Panc1 (cell line): ENCODE measurements at regions of chr12 and their contacts with region 1.

Region 1: GRCh38 chr12:48051681-48052080 is 47.4 kb upstream of the COL2A1 start:
- DNase-seq: no peak
- ATAC-seq: no peak
- H3K4me3 ChIP-seq: no peak overlapping the region
- H3K27ac ChIP-seq: no peak overlapping the region
- H3K4me1 ChIP-seq: no peaks in the 10 kb centered on the region
- H3K27me3 ChIP-seq: no peaks in the 10 kb centered on the region
- CTCF ChIP-seq: no peak

Region 2: GRCh38 chr12:47636908-47637780 is 414.5 kb before region 1 on chr12:
- CTCF ChIA-PET with region 1: no interaction called
- POLR2A ChIA-PET with region 1: no interaction called
- in situ Hi-C with region 1: no loop called
- intact Hi-C with region 1: no loop called
- DNase-seq: no peak
- ATAC-seq: no peak
- H3K4me3 ChIP-seq: no peak overlapping the region
- H3K27ac ChIP-seq: no peak overlapping the region
- H3K4me1 ChIP-seq: no peaks in the 10 kb centered on the region
- H3K27me3 ChIP-seq: no peaks in the 10 kb centered on the region
- CTCF ChIP-seq: peak; percentile 71

Region 3: DNA sequence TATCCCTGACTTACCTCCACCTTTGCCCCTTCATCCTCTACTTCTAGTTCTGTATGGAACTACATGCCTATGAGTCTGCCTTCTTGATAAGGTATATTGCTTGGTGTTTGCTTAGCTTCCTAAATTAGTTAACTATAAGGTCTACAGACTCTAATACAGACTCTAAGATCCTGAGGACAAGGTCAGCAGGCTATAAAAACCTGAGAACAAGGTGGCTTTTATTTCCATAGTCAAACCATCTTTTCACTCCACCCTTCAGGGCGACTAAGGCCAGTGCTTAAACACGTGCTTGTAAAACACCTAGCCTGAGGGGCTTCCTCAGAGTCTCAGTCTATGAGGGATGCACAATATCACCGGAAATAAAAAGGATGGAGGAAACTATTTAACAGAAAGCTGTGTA is 11.3 kb before region 1 on chr12:
- CTCF ChIA-PET with region 1: no interaction called
- POLR2A ChIA-PET with region 1: interaction called, 10 read pairs
- in situ Hi-C with region 1: no loop called
- intact Hi-C with region 1: no loop called
- DNase-seq: no peak
- ATAC-seq: peak; percentile 31; the same call in 1 of the 2 replicates
- H3K4me3 ChIP-seq: no peak overlapping the region
- H3K27ac ChIP-seq: no peak overlapping the region
- H3K4me1 ChIP-seq: no peaks in the 10 kb centered on the region
- H3K27me3 ChIP-seq: no peaks in the 10 kb centered on the region
- CTCF ChIP-seq: no peak

Region 4: GRCh38 chr12:48084066-48084465 is 32.4 kb after region 1 on chr12:
- CTCF ChIA-PET with region 1: interaction called, 12 read pairs
- POLR2A ChIA-PET with region 1: no interaction called
- in situ Hi-C with region 1: no loop called
- intact Hi-C with region 1: no loop called
- DNase-seq: no peak
- ATAC-seq: no peak
- H3K4me3 ChIP-seq: no peak overlapping the region
- H3K27ac ChIP-seq: no peak overlapping the region
- H3K4me1 ChIP-seq: no peaks in the 10 kb centered on the region
- H3K27me3 ChIP-seq: no peaks in the 10 kb centered on the region
- CTCF ChIP-seq: no peak; the same call in 1 of the 2 replicates

Region 5: GRCh38 chr12:48263617-48264016 is 211.9 kb after region 1 on chr12:
- CTCF ChIA-PET with region 1: no interaction called
- POLR2A ChIA-PET with region 1: no interaction called
- in situ Hi-C with region 1: no loop called
- intact Hi-C with region 1: no loop called
- DNase-seq: no peak
- ATAC-seq: no peak
- H3K4me3 ChIP-seq: no peak overlapping the region
- H3K27ac ChIP-seq: no peak overlapping the region
- H3K4me1 ChIP-seq: no peaks in the 10 kb centered on the region
- H3K27me3 ChIP-seq: peaks cover 9% of the 10 kb centered on the region
- CTCF ChIP-seq: no peak

Region 6: DNA sequence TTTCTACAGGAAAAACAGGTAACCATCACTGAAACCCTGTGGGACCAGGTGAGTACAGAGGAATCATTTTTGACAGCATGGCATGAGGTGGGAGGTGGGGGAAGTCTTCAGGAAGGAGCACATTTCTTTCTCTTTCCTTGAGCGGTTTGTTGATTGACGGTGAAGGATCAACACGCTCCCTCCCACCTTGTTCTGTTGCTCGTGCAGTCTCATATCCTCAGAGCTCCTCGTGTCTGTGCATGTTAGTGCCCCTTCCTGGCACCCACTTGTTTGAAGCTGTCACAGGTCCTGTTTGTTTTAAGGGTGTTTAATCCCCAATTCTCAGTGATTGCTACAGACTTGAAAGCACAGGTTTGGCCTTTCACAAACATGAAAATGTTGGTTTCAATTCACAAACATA is 435.0 kb after region 1 on chr12:
- CTCF ChIA-PET with region 1: no interaction called
- POLR2A ChIA-PET with region 1: no interaction called
- in situ Hi-C with region 1: no loop called
- intact Hi-C with region 1: no loop called
- DNase-seq: no peak
- ATAC-seq: no peak
- H3K4me3 ChIP-seq: no peak overlapping the region
- H3K27ac ChIP-seq: no peak overlapping the region
- H3K4me1 ChIP-seq: no peaks in the 10 kb centered on the region
- H3K27me3 ChIP-seq: peaks cover 22% of the 10 kb centered on the region
- CTCF ChIP-seq: no peak